WTC11 (cell line): ENCODE measurements at regions of chr1 and their contacts with region 1.

Region 1: GRCh38 chr1:109643385-109644230 is 12.3 kb upstream of the GSTM4 start:
- DNase-seq: peak; percentile 97
- ATAC-seq: peak; percentile 93
- H3K4me3 Mint-ChIP-seq: no peak overlapping the region
- H3K27ac Mint-ChIP-seq: no peak overlapping the region
- H3K4me1 Mint-ChIP-seq: peaks cover 7% of the 10 kb centered on the region
- H3K27me3 Mint-ChIP-seq: peaks cover 5% of the 10 kb centered on the region; the same call in 1 of the 2 replicates
- CTCF ChIP-seq: peak; percentile 76; the same call in 1 of the 2 replicates

Region 2: DNA sequence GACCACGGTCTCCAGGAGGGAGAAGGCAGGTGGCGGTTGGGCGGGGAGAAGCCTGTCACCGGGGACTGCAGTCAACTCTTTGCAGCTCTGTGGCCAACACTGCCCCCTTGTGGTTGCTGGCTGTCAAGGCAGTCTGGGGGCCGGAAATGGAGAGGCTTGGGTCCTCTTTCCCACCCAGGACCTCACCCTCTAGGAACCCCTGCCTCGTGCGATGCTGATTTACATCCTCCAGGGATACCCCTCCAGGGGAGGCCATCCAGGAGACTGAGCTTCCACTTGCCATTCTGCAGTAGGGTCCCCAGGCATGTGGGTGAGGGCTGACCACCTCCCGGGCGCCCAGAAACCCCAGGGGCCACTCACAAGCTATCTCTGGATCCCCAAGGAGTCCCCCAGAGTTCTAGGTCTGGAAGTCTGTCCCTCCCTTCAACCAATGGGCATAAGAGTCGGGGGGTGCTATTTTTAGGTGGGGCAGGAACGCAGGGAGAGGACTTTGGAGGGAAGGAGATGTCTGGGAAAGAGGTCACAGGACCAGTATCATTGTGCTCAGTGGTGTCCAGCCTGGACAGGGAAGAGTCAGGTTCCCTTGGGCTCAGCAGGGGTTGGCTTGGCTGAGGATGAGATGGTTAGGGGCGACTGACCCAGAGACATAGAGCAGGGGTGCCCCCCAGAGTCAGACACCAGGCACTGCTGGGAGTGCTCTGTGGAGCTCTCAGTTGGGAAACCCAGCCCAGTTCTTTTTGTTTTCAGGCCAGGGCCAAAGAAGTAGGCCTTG is 111.1 kb before region 1 on chr1:
- CTCF ChIA-PET with region 1: interaction called, 21 read pairs
- POLR2A ChIA-PET with region 1: no interaction called
- DNase-seq: peak; percentile 96
- ATAC-seq: peak; percentile 91
- H3K4me3 Mint-ChIP-seq: peak overlapping the region; percentile 38; the same call in 1 of the 2 replicates
- H3K27ac Mint-ChIP-seq: peak overlapping the region; percentile 8; the same call in 1 of the 2 replicates
- H3K4me1 Mint-ChIP-seq: peaks cover 10% of the 10 kb centered on the region
- H3K27me3 Mint-ChIP-seq: peaks cover 8% of the 10 kb centered on the region
- CTCF ChIP-seq: peak; percentile 97

Region 3: DNA sequence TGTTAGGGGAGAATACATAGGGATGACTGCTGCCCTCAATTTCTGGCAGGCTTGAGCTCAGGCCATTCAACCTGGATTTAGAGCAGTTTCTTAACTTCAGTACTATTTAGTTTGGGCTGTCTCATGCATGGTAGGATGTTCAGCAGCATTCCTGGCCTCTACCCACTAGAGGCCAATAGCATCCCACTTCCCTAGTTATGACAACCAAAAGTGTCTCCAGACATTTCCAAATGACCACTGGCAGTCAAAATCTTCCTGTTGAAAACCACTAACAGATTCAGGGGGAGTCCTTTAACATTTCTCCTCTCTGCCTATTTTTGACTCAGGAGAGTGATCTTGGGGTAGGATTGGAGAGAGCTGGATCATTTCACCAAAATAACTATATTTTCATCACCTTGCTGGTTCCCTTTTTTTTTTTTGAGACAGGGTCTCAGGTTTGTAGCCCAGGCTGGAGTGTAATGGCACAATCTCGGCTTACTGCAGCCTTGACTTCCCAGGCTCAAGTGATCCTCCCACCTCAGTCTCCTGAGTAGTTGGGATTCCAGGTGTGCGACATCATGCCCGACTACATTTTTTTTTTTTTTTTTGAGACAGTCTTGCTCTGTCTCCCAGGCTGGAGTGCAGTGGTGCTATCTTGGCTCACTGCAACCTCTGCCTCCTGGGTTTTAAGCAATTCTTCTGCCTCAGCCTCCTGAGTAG is 32.9 kb before region 1 on chr1:
- CTCF ChIA-PET with region 1: interaction called, 11 read pairs
- POLR2A ChIA-PET with region 1: no interaction called
- DNase-seq: no peak
- ATAC-seq: peak; percentile 46; the same call in 1 of the 2 replicates
- H3K4me3 Mint-ChIP-seq: no peak overlapping the region
- H3K27ac Mint-ChIP-seq: no peak overlapping the region
- H3K4me1 Mint-ChIP-seq: peaks cover 27% of the 10 kb centered on the region
- H3K27me3 Mint-ChIP-seq: no peaks in the 10 kb centered on the region
- CTCF ChIP-seq: no peak

Region 4: DNA sequence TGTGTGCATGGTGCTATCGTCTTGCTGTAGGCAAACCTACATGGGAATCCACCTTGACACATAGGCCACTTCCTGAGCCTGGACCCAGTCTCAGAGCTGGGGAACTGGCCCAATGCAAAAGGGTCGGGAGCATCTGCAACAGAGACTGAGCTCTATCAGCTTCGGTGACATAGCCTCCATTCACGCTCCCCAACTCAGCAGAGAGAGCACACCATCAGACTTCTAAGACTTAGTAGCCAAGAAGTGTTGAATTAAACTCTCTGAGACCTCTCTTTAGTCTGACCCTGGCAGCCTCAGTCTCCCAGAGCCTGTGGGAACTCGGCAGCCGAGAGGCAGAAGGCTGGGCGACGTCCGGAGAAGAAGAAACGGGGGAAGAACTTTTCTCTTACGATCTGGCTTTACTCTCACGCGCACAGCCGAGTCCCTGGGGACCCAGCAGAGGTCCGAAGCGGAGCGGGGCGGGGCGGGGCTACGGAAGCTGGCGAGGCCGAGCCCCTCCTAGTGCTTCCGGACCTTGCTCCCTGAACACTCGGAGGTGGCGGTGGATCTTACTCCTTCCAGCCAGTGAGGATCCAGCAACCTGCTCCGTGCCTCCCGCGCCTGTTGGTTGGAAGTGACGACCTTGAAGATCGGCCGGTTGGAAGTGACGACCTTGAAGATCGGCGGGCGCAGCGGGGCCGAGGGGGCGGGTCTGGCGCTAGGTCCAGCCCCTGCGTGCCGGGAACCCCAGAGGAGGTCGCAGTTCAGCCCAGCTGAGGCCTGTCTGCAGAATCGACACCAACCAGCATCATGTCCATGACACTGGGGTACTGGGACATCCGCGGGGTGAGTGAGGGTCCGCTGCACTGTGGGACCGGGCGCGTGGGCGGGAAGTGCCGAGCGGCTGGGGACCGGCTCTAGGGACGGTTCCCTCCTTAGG is 12.3 kb after region 1 on chr1 and contains the start of gene GSTM4:
- CTCF ChIA-PET with region 1: interaction called, 65 read pairs
- POLR2A ChIA-PET with region 1: no interaction called
- DNase-seq: peak; percentile 87
- ATAC-seq: peak; percentile 97
- H3K4me3 Mint-ChIP-seq: peak within 1 kb of the TSS; percentile 91
- H3K27ac Mint-ChIP-seq: peak within 1 kb of the TSS; percentile 93
- H3K4me1 Mint-ChIP-seq: peaks cover 12% of the 10 kb centered on the region
- H3K27me3 Mint-ChIP-seq: peaks cover 36% of the 10 kb centered on the region
- CTCF ChIP-seq: no peak
- total RNA-seq, gene GSTM4: 16.4 to 18.1 TPM (median 16.7 TPM) in 3 replicates

Region 5: DNA sequence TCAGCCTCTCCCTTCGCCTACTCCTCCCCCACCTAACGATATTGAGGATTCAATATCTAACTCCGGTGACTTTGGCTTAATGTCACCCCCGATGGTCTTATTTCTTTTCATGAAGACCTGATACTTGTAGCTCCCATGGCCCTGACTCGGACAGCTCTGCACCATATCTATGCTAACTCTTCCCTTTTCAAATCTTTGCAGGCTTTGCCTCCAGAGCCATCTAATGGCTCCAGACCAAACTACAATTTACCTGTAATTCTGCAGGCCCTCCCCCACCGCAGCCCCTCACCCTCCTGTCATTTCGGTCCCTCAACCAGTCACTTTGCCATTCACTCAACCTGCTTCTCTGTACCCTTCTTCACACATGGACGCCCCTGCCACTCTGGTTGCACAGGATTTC is 60.6 kb after region 1 on chr1:
- CTCF ChIA-PET with region 1: interaction called, 31 read pairs
- POLR2A ChIA-PET with region 1: no interaction called
- DNase-seq: no peak
- ATAC-seq: peak; percentile 43
- H3K4me3 Mint-ChIP-seq: no peak overlapping the region
- H3K27ac Mint-ChIP-seq: no peak overlapping the region
- H3K4me1 Mint-ChIP-seq: no peaks in the 10 kb centered on the region
- H3K27me3 Mint-ChIP-seq: peaks cover 7% of the 10 kb centered on the region
- CTCF ChIP-seq: no peak

Region 6: DNA sequence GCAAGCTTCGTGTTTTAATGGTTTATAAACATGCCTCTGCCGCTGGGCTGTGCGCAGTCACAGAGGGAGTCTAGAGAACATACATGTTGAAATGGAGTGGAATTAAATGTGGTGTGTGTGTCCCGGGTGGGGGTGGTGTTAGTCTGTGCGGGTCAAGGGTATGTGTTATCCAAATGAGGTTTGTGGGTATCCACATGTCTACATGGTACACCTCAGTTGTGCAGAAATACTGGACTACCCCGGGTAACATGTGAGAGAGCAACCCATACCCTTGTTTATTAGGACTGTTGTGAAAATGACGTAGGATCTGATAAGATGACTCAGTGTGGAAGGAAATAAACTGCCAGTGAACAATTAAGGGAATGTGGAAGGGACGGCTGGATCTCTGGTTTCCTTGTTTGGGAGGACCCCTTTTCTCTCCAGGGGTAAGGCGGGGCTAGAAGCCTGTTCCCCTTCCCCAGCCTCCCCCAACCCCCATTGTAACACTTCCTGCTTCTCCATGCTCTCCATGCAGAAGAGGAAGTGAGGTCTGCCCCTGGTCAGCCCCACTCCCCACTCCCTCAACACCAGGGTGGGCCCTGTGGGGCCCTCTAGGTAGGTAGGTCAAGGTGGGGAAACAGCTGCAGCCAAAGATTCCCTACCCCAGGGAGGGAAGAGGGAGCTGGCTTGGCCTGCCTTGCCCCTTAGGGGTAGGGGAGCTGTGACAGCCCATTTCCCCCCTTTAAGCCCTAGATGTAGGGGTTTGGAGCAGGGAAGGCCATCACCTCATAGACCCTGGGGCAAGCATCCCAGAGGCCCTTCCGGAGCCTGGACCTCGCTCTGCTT is 119.4 kb after region 1 on chr1:
- CTCF ChIA-PET with region 1: interaction called, 188 read pairs
- POLR2A ChIA-PET with region 1: no interaction called
- DNase-seq: no peak
- ATAC-seq: no peak
- H3K4me3 Mint-ChIP-seq: no peak overlapping the region
- H3K27ac Mint-ChIP-seq: no peak overlapping the region
- H3K4me1 Mint-ChIP-seq: peaks cover 6% of the 10 kb centered on the region; the same call in 1 of the 2 replicates
- H3K27me3 Mint-ChIP-seq: no peaks in the 10 kb centered on the region; the same call in 1 of the 2 replicates
- CTCF ChIP-seq: no peak

Region 7: GRCh38 chr1:110034451-110035235 is 391.0 kb after region 1 on chr1 and contains the start of gene STRIP1:
- CTCF ChIA-PET with region 1: interaction called, 10 read pairs
- POLR2A ChIA-PET with region 1: no interaction called
- DNase-seq: peak; percentile 88
- ATAC-seq: peak; percentile 83
- H3K4me3 Mint-ChIP-seq: peak within 1 kb of the TSS; percentile 92
- H3K27ac Mint-ChIP-seq: peak within 1 kb of the TSS; percentile 95
- H3K4me1 Mint-ChIP-seq: peaks cover 33% of the 10 kb centered on the region
- H3K27me3 Mint-ChIP-seq: no peaks in the 10 kb centered on the region
- CTCF ChIP-seq: no peak
- total RNA-seq, gene STRIP1: 36.8 to 42.8 TPM (median 38.2 TPM) in 3 replicates